GM12878 (cell line): ENCODE measurements at regions of chr7 and their contacts with region 1.

Region 1: DNA sequence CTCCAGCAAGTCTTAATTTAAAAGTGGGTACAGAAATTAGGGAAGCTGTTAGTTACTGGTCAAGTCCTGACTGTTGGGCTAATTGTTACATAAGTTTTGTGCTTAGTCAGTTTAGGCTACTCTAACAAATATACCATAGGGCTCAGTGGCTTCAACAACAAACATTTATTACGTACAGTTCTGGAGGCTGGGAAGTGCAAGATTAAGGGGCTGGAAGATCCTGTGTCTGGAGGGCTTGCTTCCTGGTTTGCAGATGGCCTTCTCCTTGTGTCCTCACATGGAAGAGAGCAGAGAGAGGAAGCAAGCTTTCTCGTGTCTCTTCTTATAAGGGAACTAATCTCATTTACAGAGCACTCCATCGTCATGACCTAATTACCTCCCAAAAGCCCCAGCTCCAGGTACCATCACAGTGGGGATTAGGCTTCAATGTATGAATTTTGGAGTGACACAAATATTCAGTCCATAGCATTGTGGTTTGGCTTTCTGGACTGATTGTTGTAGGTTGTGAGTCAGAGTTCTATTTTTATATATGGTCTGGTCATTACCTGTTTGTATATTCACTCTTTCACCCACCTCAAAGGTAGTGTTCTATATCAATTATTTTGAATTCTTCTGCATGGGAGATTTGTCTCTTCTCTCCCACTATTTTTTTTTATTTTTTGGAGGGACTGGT is 17.1 kb downstream of the ST7 start:
- DNase-seq: no peak
- ATAC-seq: peak; percentile 87
- H3K4me3 ChIP-seq: peak overlapping the region; percentile 20; the same call in 1 of the 2 replicates
- H3K27ac ChIP-seq: peak overlapping the region; percentile 57
- H3K4me1 ChIP-seq: peaks cover 21% of the 10 kb centered on the region
- H3K27me3 ChIP-seq: no peaks in the 10 kb centered on the region
- CTCF ChIP-seq: no peak
- EP300 ChIP-seq: peak in 1 of 2 experiments; percentile 24; a peak in 1 of 4 replicates
- POLR2A ChIP-seq: no peak
- RAD21 ChIP-seq: no peak

Region 2: DNA sequence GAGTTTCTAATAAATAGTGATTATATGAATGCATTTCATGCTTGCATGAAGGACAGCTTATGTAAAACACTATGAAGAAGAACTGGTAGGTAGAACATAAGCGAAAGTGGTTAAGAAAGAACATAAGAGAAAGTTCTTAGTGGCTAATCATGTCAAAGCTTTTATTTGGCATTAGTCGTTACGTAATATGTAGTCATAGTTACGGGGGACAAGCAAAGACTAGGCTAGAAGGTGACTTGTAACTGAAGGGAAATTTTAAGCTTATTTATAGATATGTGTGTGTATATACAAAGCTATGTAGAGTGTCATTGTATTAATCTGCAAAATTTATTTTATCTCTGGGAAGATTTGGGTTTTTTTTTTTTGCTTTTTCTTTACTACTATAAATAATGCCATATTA is 71.1 kb before region 1 on chr7:
- CTCF ChIA-PET with region 1: no interaction called
- POLR2A ChIA-PET with region 1: no interaction called
- RAD21 ChIA-PET with region 1: no interaction called
- SMC1A ChIA-PET with region 1: no interaction called
- in situ Hi-C with region 1: no loop called
- intact Hi-C with region 1: no loop called
- DNase-seq: no peak
- ATAC-seq: peak; percentile 21; the same call in 1 of the 3 replicates
- H3K4me3 ChIP-seq: no peak overlapping the region
- H3K27ac ChIP-seq: no peak overlapping the region
- H3K4me1 ChIP-seq: no peaks in the 10 kb centered on the region
- H3K27me3 ChIP-seq: no peaks in the 10 kb centered on the region
- CTCF ChIP-seq: no peak
- EP300 ChIP-seq: no peak
- POLR2A ChIP-seq: no peak
- RAD21 ChIP-seq: no peak

Region 3: GRCh38 chr7:117008883-117009531 is 38.6 kb after region 1 on chr7:
- CTCF ChIA-PET with region 1: interaction called, 5 read pairs
- POLR2A ChIA-PET with region 1: interaction called, 5 read pairs
- RAD21 ChIA-PET with region 1: interaction called, 5 read pairs
- SMC1A ChIA-PET with region 1: interaction called, 27 read pairs
- in situ Hi-C with region 1: no loop called
- intact Hi-C with region 1: no loop called
- DNase-seq: no peak
- ATAC-seq: peak; percentile 9
- H3K4me3 ChIP-seq: 0 out of 2 replicates have a peak overlapping the region, but pooled peaks have one; percentile 9
- H3K27ac ChIP-seq: peak overlapping the region; percentile 100
- H3K4me1 ChIP-seq: peaks cover 46% of the 10 kb centered on the region
- H3K27me3 ChIP-seq: no peaks in the 10 kb centered on the region
- CTCF ChIP-seq: no peak
- EP300 ChIP-seq: peak in 1 of 2 experiments; percentile 50; a peak in 1 of 4 replicates
- POLR2A ChIP-seq: no peak
- RAD21 ChIP-seq: no peak